Adrenal gland (tissue), 19 donors: ENCODE measurements at regions of chr17 and their contacts with region 1.

Region 1: DNA sequence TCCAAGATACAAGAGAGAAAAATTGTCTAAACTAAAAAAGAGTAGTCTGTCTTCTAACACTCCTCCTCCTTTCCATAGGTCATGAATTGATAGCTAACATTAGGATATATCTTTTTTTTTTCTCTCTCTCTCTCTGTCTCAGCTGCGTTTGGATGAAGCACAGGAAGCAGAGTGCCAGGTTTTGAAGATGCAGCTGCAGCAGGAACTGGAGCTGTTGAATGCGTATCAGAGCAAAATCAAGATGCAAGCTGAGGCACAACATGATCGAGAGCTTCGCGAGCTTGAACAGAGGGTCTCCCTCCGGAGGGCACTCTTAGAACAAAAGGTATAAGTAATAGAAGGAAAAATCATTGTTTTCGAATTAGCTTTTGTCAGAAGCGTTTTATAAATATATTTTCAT is 32.9 kb downstream of the ABHD15 start:
- DNase-seq: no peak
- H3K4me3 ChIP-seq: no peak overlapping the region
- H3K27ac ChIP-seq: no peak overlapping the region
- H3K4me1 ChIP-seq: no peaks in the 10 kb centered on the region
- H3K27me3 ChIP-seq: no peaks in the 10 kb centered on the region
- CTCF ChIP-seq: no peak
- POLR2A ChIP-seq: no peak

Region 2: DNA sequence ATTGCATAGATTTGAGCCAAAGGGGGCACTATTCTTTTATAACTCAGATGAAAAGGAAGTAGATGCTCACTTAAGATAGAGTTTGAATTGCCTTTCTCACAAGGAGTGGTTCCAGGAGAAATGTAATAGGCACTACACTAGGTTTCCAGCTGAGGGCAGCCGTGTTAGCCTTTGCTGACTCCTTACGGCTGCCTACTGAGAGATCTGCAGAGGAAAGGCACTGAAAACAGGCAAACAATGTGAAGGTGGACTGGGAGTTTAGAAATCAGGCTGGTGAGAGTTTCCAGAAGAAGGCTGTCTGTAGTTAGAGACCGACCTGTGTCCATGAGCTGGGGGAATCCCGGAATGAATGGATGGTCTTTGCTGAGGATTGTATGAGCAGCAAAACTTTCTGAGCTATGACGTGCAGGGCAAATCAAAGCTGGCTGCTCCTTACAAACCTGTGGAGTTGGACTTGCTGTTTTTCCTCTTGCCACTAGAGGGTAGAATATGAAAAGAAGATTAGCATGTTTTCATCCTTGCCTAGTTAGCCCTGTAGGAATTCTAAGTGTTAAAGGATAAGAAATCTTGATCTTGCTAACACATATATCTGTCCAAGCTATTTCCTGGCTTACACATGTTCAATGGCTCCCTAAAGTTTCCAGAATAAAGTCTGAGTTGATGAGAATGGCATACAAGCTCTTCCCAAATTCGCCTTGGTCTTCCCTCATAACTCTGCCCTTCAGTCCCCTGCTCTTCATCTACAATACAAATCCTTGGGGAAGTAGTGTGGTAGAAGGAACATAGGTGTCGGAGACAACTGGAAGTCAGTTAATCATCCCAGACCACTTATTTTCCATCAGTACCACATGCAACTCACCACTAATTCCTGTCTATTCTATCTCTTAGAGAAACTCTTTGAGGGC is 163.9 kb before region 1 on chr17:
- intact Hi-C with region 1: loop called (anchors 2 to 5 kb)
- DNase-seq: peak; percentile 55 to 87 (median 73)
- H3K4me3 ChIP-seq: peak overlapping the region in 2 of 4 donors; percentile 14 to 21
- H3K27ac ChIP-seq: peak overlapping the region in 3 of 5 donors; percentile 39 to 69 (median 45)
- H3K4me1 ChIP-seq: no peaks in the 10 kb centered on the region
- H3K27me3 ChIP-seq: no peaks in the 10 kb centered on the region
- CTCF ChIP-seq: peak; percentile 67 to 95 (median 78)
- POLR2A ChIP-seq: no peak